ENCODE measurements at regions of chr3 and their contacts with region 1.

Region 1: DNA sequence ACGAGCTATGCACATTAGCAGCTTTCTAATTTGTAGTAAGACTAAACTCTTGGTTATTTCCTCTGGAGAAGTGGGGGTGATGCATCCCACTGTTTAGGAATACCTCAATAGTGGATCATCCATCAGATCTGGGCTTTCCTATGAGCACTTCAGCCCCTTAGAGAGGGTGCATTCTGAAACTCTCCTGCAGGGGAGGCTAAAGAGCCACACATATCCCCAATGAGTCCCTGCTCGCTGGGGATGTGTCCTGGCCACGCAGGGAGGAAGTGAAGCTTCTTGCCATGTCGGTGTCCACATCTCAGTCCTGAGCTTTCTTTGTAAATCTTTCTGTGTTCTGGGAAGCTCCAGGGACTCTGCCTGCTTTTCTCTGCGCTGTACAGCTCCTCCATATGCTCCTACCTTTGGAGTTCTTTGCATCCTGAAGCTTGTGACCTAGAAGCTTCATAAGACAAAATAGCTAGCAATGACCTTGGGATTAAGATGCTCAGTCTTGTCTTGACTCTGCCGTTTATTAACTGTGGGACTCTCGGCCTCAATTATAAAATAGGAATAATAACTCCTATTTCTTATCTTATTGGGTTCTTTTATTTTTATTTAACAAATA is 28.3 kb upstream of the MASP1 start:
- DNase-seq: peak; percentile 78
- H3K4me3 Mint-ChIP-seq: no peak overlapping the region
- H3K27ac Mint-ChIP-seq: no peak overlapping the region
- H3K4me1 Mint-ChIP-seq: peaks cover 9% of the 10 kb centered on the region
- H3K27me3 Mint-ChIP-seq: peaks cover 20% of the 10 kb centered on the region

Region 2: DNA sequence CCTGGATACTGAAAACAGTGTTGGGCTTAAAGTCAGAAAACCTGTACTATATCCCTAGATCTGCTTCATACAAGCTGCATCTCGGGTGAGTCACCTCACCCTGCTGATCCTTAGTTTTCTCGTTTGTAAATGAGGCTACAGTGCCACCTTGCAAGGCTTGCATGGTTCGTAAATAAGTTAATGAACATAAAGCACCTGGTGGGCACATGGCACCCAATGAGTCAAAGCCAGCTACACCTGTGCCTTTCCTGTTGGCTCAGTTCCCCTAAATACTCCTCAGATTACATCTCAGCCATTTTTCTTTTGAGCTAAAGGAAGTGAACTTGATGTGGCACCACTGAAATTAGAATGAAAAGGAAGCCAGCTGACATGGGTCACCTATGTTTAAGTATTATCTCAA is 96.0 kb before region 1 on chr3:
- CTCF ChIA-PET with region 1: interaction called, 24 read pairs
- POLR2A ChIA-PET with region 1: no interaction called
- intact Hi-C with region 1: loop called (anchors 1 kb)
- DNase-seq: no peak
- H3K4me3 Mint-ChIP-seq: no peak overlapping the region
- H3K27ac Mint-ChIP-seq: no peak overlapping the region
- H3K4me1 Mint-ChIP-seq: no peaks in the 10 kb centered on the region
- H3K27me3 Mint-ChIP-seq: peaks cover 3% of the 10 kb centered on the region

Region 3: GRCh38 chr3:187305881-187306280 is 13.9 kb before region 1 on chr3:
- CTCF ChIA-PET with region 1: interaction called, 34 read pairs
- POLR2A ChIA-PET with region 1: no interaction called
- intact Hi-C with region 1: no loop called
- DNase-seq: no peak
- H3K4me3 Mint-ChIP-seq: no peak overlapping the region
- H3K27ac Mint-ChIP-seq: no peak overlapping the region
- H3K4me1 Mint-ChIP-seq: no peaks in the 10 kb centered on the region
- H3K27me3 Mint-ChIP-seq: peaks cover 14% of the 10 kb centered on the region

Region 4: GRCh38 chr3:187368251-187369088 is 48.7 kb after region 1 on chr3 and contains the start of gene RTP4:
- CTCF ChIA-PET with region 1: interaction called, 31 read pairs
- POLR2A ChIA-PET with region 1: no interaction called
- intact Hi-C with region 1: no loop called
- DNase-seq: peak; percentile 42
- H3K4me3 Mint-ChIP-seq: peak within 1 kb of the TSS; percentile 74
- H3K27ac Mint-ChIP-seq: peak within 1 kb of the TSS; percentile 88
- H3K4me1 Mint-ChIP-seq: peaks cover 27% of the 10 kb centered on the region
- H3K27me3 Mint-ChIP-seq: no peaks in the 10 kb centered on the region
- total RNA-seq, gene RTP4: 1.7 to 2.7 TPM

Region 5: GRCh38 chr3:187616307-187616972 is 296.6 kb after region 1 on chr3:
- CTCF ChIA-PET with region 1: interaction called, 105 read pairs
- POLR2A ChIA-PET with region 1: no interaction called
- intact Hi-C with region 1: loop called (anchors 2 kb)
- DNase-seq: peak; percentile 67
- H3K4me3 Mint-ChIP-seq: no peak overlapping the region
- H3K27ac Mint-ChIP-seq: no peak overlapping the region
- H3K4me1 Mint-ChIP-seq: no peaks in the 10 kb centered on the region
- H3K27me3 Mint-ChIP-seq: peaks cover 9% of the 10 kb centered on the region

Region 6: DNA sequence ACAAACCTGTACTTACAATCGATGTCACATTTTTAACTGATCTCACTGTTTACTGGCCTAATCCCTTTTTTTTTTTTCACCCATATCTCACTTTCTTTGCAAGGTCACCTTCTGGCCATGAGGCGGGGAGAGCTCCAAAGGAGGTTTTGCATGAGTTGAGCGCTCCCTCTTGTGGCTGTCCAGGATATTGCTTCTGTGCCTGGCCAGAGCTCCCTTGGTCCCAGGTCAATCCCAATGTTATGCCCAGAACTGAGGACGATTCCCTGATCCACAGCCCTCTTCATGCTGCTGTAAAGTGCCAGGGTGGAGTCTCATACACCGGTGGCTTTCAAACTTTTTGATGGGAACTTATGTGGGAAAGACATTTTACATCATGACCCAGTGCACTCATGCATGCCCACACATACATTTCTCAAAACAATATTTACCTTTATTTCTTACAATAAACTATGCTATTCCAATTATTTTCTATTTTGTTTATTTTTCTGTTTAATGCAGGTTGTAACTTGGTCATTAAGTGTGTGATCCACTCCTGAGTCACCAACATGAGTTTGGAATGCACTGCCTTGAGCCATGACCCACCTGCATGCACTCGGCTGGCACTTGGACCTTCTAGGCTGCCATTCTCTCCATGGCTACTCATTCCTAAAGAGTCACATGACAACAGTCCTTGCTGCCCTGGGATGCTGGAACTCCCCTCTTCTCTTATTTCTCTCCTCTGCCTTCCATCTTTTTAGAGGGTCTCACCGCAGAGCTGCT is 360.0 kb after region 1 on chr3:
- CTCF ChIA-PET with region 1: interaction called, 515 read pairs
- POLR2A ChIA-PET with region 1: interaction called, 4 read pairs
- intact Hi-C with region 1: loop called (anchors 1 kb)
- DNase-seq: peak; percentile 76
- H3K4me3 Mint-ChIP-seq: no peak overlapping the region
- H3K27ac Mint-ChIP-seq: no peak overlapping the region
- H3K4me1 Mint-ChIP-seq: peaks cover 3% of the 10 kb centered on the region
- H3K27me3 Mint-ChIP-seq: peaks cover 31% of the 10 kb centered on the region

Region 7: DNA sequence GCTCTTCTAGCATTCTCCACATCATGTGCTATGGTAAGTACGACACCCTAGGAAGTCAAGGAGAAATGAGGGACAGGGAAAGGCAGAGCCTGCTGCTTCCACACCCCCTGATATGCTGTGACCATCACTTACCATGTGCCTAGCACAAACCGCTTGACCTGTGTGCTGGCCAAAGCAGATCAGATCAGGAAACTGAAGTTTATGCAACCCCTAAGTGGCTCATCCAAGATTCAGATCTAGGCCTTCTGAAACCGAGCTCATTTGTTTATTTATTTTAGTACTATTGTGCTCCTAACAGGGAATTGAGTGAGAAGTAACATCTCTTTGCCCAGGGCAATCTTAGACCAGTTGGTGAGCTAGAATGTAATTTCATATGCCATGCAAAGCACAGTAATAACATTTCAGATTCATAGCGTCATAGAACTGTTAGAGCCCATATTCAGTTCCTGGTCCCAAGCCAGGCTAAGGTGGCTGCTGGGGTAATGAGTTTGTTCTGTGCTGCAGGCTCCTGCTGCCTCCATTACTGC is 382.8 kb after region 1 on chr3 and contains the start of gene RTP2:
- CTCF ChIA-PET with region 1: interaction called, 18 read pairs
- POLR2A ChIA-PET with region 1: no interaction called
- intact Hi-C with region 1: no loop called
- DNase-seq: no peak
- H3K4me3 Mint-ChIP-seq: no peak within 1 kb of the TSS
- H3K27ac Mint-ChIP-seq: no peak within 1 kb of the TSS
- H3K4me1 Mint-ChIP-seq: no peaks in the 10 kb centered on the region
- H3K27me3 Mint-ChIP-seq: no peaks in the 10 kb centered on the region
- total RNA-seq, gene RTP2: not detected